Activated CD4-positive, alpha-beta memory T cell treated with anti-CD3 and anti-CD28 coated beads for 36 hours (primary cell): ENCODE measurements at regions of chr6 and their contacts with region 1.

Region 1: DNA sequence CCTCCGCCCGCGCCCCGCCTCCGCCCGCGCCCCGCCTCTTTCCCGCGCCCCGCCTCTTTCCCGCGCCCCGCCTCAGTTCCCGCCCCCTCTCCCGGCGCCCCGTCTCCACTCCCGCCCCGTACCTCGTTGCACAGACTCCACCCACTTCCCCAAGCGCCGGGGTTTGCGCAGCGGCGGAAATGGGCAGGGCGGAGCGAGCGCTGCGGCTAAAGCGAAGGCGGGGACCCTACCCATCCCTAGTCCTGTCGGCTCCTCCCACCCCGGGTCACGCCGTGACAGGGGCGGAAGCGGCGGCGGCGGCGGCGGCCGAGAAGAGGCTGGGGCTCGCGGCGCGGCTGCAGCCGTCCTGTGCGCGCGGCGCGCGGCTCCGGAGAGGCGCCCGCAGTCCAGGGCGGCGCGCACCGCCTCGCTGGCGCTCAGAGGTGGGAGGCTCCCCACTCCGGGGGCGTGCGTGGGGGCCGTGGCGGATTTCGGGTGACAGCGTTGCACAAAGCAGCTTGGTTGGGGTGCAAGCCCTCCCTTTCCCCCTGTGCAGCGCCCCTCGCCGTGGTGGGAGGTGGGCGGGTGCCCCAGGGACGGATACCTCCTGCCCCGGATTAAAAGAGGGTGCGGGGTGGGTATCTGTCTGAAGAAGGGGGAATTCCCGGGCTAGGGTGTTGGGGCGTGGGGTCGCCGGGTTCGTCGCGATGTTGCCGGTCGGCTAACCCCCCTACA is at the start of gene KDM1B:
- DNase-seq: peak; percentile 99
- H3K4me3 Mint-ChIP-seq: peak within 1 kb of the TSS; percentile 97
- H3K27ac Mint-ChIP-seq: peak within 1 kb of the TSS; percentile 87
- H3K4me1 Mint-ChIP-seq: peaks cover 24% of the 10 kb centered on the region
- H3K27me3 Mint-ChIP-seq: no peaks in the 10 kb centered on the region
- total RNA-seq, gene KDM1B: 17.5 to 18.5 TPM

Region 2: GRCh38 chr6:18102783-18103509 is 52.4 kb before region 1 on chr6:
- CTCF ChIA-PET with region 1: no interaction called
- POLR2A ChIA-PET with region 1: no interaction called
- intact Hi-C with region 1: no loop called
- DNase-seq: no peak
- H3K4me3 Mint-ChIP-seq: no peak overlapping the region
- H3K27ac Mint-ChIP-seq: no peak overlapping the region
- H3K4me1 Mint-ChIP-seq: no peaks in the 10 kb centered on the region
- H3K27me3 Mint-ChIP-seq: peaks cover 25% of the 10 kb centered on the region

Region 3: DNA sequence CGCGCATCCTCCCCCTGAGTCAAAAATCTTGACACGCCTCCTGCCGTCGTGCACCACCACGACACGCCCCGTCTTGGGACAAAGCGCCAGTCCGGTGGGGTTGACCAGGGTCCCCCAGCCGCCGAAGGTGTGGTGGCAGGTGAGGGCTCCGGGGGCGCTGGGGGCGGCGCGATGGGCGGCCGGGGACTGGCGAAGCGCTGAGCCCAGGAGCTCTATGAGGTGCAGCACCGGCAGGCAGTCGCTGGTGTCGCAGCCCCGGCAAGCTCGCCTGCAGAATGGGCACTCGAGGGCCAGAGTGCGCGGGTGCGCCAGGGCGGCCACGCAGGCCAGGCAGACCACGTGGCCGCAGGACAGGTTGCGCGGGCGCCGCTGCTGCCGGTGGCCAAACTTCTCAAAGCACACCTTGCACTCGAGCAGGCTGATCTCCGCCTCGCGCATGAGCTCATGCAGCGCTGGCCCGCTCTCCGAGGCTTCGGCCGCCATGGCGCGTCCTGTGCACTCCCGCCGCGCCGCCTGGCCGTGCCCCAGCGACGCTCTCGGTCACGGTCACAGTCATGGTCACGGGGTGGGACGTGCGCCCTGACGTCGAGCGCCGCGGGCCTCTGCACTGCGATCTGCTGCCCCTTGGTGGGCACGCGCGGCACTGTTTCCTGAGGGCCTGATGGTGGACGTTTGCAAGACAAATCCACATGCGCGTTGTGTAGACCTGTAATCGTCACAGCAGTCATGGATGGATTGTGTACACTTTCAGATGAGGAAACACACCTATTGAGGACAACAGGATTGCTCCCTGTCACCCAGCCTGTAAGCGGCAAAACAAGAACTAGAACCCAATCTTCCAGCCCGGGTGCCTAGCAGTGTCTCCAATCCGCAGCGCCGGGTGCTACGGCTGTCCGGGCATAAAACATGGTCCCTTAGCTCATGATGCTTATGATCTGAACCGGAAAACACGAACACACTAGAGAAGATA is 32.9 kb before region 1 on chr6 and contains the start of gene NHLRC1:
- CTCF ChIA-PET with region 1: no interaction called
- POLR2A ChIA-PET with region 1: no interaction called
- intact Hi-C with region 1: loop called (anchors 1 kb)
- DNase-seq: peak; percentile 87
- H3K4me3 Mint-ChIP-seq: peak within 1 kb of the TSS; percentile 57
- H3K27ac Mint-ChIP-seq: no peak within 1 kb of the TSS
- H3K4me1 Mint-ChIP-seq: peaks cover 13% of the 10 kb centered on the region
- H3K27me3 Mint-ChIP-seq: peaks cover 24% of the 10 kb centered on the region
- total RNA-seq, gene NHLRC1: 0.10 to 0.19 TPM

Region 4: DNA sequence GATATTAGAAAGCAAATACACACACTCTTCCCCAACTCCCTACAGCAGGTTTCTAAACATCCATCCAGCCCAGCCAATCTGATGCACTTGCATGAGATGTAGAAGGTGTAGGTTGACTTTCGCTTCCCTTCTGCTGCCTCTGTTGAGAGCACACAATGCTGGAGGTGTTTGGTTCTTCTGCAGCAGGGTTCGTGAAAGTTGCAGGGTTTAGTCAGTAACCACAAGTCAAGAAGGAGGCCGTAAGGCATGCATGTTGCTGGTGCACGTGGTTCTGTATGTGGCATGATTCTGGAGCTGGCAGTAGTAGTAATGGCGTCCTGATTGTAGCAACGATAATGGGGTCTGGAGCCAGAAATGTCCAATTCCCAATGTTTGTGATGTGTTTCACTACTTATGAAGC is 56.0 kb after region 1 on chr6:
- CTCF ChIA-PET with region 1: no interaction called
- POLR2A ChIA-PET with region 1: no interaction called
- intact Hi-C with region 1: loop called (anchors 1 kb)
- DNase-seq: peak; percentile 63
- H3K4me3 Mint-ChIP-seq: no peak overlapping the region
- H3K27ac Mint-ChIP-seq: no peak overlapping the region
- H3K4me1 Mint-ChIP-seq: peaks cover 23% of the 10 kb centered on the region
- H3K27me3 Mint-ChIP-seq: no peaks in the 10 kb centered on the region

Region 5: GRCh38 chr6:18253635-18254034 is 98.3 kb after region 1 on chr6:
- CTCF ChIA-PET with region 1: no interaction called
- POLR2A ChIA-PET with region 1: no interaction called
- intact Hi-C with region 1: no loop called
- DNase-seq: no peak
- H3K4me3 Mint-ChIP-seq: no peak overlapping the region
- H3K27ac Mint-ChIP-seq: no peak overlapping the region
- H3K4me1 Mint-ChIP-seq: peaks cover 15% of the 10 kb centered on the region
- H3K27me3 Mint-ChIP-seq: no peaks in the 10 kb centered on the region

Region 6: DNA sequence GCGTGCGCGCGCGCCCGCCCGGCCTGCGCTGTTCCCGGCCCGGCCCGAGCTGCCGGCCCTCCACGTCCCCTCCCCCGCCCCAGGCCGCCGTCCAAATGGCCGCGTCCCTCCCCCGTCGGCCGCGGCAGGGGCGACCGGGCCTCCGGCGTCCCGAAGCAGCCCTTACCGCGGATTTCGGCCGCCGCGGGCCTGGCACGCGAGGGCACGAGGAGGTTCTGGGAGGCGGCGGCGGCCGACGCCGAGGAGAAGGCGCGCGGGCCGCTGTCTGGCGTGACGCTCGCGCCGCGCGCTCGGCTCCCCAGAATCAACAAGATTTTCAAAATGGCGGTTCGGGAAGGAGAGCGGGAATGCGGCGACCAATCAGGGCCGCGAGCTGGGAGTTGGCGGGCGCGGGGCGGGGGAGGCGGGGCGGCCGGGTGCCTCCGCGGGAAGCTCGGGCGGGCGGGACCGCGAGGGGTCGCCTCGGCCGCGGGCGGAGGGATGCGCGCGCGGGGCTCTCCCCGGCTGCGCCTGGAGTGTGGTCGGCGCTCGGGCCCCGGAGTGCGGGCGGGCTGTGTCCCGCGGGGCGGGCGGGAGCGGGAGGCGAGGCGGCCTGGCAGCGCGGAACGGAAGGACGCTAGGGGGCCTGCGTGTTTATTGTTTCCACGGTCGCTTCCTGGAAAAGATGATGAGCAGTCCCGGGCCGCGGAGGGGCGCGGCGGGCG is 109.1 kb after region 1 on chr6 and contains the start of gene DEK:
- CTCF ChIA-PET with region 1: no interaction called
- POLR2A ChIA-PET with region 1: no interaction called
- intact Hi-C with region 1: loop called (anchors 1 kb)
- DNase-seq: peak; percentile 90
- H3K4me3 Mint-ChIP-seq: peak within 1 kb of the TSS; percentile 95
- H3K27ac Mint-ChIP-seq: peak within 1 kb of the TSS; percentile 96
- H3K4me1 Mint-ChIP-seq: peaks cover 49% of the 10 kb centered on the region
- H3K27me3 Mint-ChIP-seq: no peaks in the 10 kb centered on the region
- total RNA-seq, gene DEK: 180 to 182 TPM

Region 7: DNA sequence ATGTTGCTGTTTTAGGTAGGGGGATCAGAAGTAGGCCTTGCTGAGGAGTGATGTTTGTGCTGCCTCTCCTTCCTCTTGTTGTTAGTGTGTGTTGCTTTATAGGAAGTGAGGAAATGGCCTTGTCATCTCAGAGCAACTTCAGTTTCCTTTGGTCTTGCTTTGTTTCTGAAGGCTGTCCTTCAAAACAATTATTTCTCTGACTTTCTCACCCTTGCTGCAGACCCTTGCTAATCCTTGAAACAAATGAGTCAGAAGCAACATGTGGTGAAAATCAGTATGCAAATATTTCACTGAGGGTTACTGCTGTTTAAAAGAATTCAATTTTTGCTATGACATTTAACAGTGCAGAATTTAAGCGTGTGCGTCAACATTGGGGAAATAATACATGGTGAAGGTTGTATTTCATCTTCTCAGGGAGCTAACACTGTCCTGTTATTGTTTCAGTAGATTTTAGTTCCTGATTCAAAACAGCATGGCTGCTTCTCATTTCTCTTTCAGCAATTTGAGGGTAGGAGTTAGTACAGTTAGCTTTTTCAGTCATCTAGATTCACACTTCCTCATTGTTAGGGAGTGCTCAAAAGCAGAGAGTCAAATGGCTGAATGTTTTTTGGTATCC is 245.6 kb after region 1 on chr6:
- CTCF ChIA-PET with region 1: no interaction called
- POLR2A ChIA-PET with region 1: no interaction called
- intact Hi-C with region 1: loop called (anchors 10 kb)
- DNase-seq: no peak
- H3K4me3 Mint-ChIP-seq: no peak overlapping the region
- H3K27ac Mint-ChIP-seq: peak overlapping the region; percentile 55
- H3K4me1 Mint-ChIP-seq: peaks cover 11% of the 10 kb centered on the region
- H3K27me3 Mint-ChIP-seq: no peaks in the 10 kb centered on the region

Region 8: DNA sequence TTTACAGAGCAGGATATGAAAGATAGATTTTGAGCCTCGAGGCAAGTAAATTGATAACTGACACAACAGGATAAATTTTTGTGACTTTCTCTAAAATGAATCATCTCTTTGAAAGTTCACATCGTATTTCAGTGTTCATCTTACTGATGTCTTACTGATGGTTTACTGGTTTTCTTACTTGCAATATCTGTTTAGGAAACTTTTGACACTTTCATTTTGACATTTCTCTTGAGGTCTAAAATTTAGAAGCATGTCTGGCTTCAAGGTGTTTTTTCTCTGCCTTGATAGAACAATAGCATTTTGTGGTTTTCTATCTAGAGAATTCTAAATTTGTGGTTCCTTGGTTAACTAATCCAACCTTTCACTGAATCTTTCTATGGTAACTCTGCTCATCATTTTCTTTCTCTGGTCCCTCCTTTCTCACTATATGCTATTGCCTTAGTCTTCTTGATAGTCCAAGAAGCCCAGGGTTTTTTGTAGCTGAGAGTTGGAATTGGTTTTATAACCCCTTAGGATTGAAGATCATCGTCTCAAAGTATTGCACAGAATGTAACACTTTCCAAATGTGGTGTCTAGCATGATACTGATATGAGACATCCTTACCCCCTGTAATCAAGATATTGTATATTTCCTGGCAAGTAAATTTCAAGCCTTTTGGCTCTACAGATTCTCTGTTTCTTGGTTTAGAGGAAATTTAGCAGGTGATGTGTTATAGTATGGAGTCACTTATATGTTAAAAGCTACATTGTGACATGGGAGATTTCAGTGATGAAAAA is 330.5 kb after region 1 on chr6:
- CTCF ChIA-PET with region 1: no interaction called
- POLR2A ChIA-PET with region 1: no interaction called
- intact Hi-C with region 1: loop called (anchors 1 kb)
- DNase-seq: no peak
- H3K4me3 Mint-ChIP-seq: no peak overlapping the region
- H3K27ac Mint-ChIP-seq: no peak overlapping the region
- H3K4me1 Mint-ChIP-seq: peaks cover 11% of the 10 kb centered on the region
- H3K27me3 Mint-ChIP-seq: peaks cover 34% of the 10 kb centered on the region

Region 9: DNA sequence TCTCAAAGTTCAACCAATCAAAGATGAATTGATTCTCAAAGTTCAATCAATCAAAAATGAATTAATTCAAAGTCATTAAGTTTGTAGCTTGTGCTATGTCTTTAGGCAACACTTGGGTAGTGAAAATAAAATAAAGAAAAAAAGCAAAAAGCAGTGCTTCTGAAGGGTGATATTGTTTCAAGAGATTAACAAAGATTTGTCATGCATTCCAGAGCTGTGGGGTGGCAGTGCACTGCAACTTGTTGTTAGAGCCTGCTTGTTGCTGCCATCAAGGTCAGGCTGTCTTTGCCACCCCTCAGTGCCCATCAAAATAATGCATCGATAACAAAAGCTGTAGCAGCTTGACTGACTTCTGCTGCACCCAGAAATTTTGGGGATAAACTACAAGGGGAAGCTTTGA is 360.5 kb after region 1 on chr6:
- CTCF ChIA-PET with region 1: no interaction called
- POLR2A ChIA-PET with region 1: no interaction called
- intact Hi-C with region 1: loop called (anchors 10 kb)
- DNase-seq: no peak
- H3K4me3 Mint-ChIP-seq: no peak overlapping the region
- H3K27ac Mint-ChIP-seq: no peak overlapping the region
- H3K4me1 Mint-ChIP-seq: peaks cover 10% of the 10 kb centered on the region
- H3K27me3 Mint-ChIP-seq: peaks cover 12% of the 10 kb centered on the region